Right ventricle myocardium inferior (tissue), 1 donor: ENCODE measurements at regions of chr16 and their contacts with region 1.

Region 1: DNA sequence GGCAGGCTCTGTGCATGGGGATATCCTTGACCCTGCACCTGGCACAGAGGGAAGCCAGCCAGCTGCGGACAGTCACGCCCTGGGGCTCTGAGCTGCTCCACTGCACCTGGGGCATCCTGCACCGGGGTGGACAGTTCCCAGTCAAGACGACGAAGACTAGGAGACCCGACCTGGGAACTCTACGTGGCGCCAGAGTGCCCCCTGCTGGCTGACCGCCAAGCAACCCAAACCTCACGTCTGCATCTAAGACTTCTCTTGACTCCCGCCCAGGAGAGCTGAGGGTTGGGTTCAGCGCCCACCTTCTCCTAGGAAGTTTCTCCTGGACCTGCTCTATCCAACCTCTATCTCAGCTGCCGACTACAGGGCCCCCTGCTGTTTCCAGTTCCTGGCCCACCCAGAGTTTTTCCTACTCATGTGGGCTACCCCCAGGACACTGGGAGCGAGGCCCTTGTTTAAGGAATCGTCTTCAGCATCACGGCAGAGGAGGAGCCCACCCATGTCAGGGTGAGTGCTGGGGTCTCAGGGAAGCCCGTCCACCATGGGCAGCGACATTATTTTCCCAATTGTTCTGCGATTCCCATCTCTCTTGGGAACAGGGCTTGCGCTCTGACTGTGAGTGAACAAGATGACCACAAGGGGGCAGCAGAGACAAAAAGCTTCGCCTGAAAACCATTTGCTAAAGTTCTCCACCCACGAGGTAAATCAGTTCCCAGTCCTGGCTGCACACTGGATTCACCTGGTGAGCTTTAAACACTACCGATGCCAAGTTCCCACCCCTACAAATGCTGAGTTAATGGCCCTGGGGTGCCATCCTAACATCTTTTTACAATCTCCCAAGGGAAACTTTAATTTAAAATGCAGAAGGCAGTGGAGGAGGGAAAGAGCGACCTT is 29.3 kb downstream of the TLE7 start:
- DNase-seq: no peak
- ATAC-seq: peak; percentile 44

Region 2: DNA sequence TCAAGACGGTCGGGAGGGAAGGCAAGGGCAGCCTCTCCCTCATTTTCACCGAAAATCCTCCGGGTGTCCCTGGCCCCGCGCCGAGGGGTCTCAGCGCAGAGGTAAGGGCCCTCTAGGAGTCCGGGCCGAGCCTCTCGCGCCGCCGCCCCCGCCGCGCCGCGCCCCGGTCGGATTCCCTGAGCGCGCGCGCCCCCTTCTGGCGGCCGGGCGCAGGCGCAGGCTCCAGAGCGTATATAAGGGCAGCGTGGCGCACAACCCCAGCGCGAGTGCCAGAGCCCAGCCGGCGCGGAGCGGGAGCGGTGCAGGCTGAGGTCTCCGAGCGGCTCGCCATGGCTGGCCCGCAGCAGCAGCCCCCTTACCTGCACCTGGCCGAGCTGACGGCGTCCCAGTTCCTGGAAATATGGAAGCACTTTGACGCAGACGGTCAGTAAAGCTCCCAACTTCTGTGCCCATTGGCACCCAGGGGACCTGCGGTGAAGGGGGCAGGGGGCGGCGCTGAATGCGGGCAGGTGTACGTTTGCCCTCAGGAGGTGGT is 54.0 kb before region 1 on chr16 and contains the start of gene CALB2:
- intact Hi-C with region 1: no loop called
- DNase-seq: peak; percentile 90
- ATAC-seq: peak; percentile 84
- total RNA-seq, gene CALB2: 1.7 TPM

Region 3: DNA sequence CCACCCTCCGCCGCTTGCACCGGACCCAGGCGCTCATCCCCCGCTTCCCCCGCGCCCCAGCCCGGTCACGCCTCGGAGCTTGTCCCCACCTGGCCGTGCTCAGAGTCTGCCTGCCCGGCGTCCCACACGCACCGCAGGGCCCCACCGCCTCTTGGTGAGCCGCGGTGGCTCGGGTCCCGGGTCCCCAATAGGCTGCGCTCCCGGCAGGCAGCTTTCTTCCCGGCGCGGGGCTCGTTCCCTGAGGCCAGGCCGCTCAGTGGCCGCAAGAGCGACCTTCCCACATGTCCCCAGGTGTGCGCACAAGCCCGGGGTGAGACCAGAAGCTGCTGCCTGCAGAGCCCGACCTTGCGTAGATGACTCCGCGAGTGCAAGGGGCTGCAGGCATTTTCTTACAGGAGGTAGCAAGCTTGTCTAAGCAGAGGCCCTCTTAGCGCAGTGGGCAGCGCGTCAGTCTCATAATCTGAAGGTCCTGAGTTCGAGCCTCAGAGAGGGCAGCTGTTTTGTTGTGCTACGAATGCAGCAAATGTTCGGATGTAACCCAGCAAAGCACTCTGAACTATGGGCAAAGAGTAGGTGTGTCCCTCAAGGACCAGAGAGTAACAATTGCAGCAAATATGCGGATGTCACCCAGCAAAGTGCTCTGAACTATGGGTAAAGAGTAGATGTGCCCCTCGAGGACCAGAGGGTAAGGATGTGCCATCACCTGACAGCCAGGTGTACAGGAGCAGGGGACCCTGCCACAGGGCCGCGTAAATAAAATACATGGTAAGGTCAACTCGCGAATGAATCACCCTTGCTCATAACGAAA is 13.8 kb after region 1 on chr16:
- intact Hi-C with region 1: no loop called
- DNase-seq: no peak
- ATAC-seq: no peak

Region 4: DNA sequence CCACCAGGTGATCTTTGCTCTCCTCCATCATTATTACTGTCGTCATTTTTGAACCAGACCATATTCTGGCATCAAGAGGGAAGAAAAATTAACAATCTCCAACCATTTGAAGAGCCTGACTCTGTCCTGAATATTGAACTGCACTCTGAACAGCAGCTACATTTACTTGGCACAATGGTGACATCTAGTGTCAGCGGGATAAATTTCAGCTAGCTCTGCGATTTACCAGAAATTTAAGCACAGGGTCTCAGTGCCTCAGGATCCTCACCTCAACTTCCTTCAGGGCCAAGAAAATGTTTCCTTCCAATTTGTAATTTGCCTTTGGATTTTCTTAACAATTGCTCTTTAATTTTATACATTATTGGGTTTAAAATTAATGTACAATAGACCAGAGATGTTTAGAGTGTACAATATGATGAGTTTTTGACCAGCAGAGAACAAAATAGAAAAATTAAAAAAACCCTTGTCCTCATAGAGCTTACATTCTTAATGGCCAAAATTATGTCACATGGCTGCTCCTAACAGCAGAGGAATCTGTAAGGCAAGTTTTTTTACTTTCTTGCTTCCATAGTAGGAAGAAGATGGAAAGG is 87.4 kb after region 1 on chr16:
- intact Hi-C with region 1: loop called (anchors 1 kb)
- DNase-seq: no peak
- ATAC-seq: peak; percentile 42

Region 5: DNA sequence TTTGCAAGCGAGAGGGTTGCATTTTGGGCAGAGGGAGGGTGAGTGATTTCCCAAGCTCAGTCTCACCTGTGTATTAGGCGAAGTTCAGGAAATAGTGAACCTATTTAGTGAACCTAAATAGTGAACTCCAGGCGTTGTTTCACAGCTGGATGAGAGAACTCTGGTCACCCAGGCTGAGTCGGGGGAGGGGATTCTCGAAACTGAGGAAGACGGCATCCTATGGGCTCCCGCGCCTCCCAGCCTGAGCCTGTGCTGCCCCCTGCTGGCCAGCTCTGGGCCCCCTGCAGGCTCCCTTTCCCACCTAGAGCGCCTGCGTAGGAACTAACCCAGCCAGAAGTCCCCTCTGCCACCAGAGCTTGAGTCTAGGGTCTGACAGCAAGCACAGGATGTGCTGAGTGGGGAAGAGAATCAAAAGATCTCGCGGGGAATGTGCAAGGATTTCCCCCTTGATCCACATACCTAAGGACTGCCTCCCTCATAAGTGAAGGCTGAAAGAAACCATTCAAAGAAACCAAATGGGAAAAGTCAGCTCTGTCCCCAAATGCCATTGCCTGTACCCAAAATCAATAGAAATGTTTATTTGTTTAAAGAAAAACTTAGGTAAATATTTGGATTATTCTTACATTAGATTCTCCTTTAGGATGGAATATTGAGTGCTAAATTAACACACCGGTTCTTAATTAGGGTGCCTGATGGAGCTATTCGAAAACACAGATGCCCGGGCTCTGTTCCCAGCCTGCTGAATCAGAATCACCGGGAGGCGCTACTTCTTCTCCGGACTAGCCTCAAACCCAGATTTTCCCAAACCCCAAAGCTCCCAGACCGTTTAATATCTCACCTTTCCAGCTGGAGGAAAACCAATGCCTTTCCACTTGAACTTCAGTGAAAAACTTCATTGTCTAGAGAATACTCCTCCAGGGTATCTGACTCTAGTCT is 198.7 kb after region 1 on chr16:
- intact Hi-C with region 1: loop called (anchors 10 kb)
- DNase-seq: no peak
- ATAC-seq: peak; percentile 64

Region 6: GRCh38 chr16:71645453-71645852 is 232.9 kb after region 1 on chr16:
- intact Hi-C with region 1: no loop called
- DNase-seq: no peak
- ATAC-seq: no peak